HEK293 (cell line): ENCODE measurements at regions of chr7 and their contacts with region 1.

Region 1: GRCh38 chr7:149125863-149126661 is at the start of gene ZNF425:
- H3K4me3 ChIP-seq: peak within 1 kb of the TSS; percentile 73
- H3K27ac ChIP-seq: peak within 1 kb of the TSS; percentile 82
- H3K4me1 ChIP-seq: no peaks in the 10 kb centered on the region
- CTCF ChIP-seq: peak; percentile 100

Region 2: GRCh38 chr7:149147072-149147751 is 21.1 kb after region 1 on chr7 and contains the start of gene ZNF398:
- CTCF ChIA-PET with region 1: interaction called, 12 read pairs
- POLR2A ChIA-PET with region 1: interaction called, 39 read pairs
- H3K4me3 ChIP-seq: peak within 1 kb of the TSS; percentile 65
- H3K27ac ChIP-seq: peak within 1 kb of the TSS; percentile 87
- H3K4me1 ChIP-seq: no peaks in the 10 kb centered on the region
- CTCF ChIP-seq: peak; percentile 74

Region 3: DNA sequence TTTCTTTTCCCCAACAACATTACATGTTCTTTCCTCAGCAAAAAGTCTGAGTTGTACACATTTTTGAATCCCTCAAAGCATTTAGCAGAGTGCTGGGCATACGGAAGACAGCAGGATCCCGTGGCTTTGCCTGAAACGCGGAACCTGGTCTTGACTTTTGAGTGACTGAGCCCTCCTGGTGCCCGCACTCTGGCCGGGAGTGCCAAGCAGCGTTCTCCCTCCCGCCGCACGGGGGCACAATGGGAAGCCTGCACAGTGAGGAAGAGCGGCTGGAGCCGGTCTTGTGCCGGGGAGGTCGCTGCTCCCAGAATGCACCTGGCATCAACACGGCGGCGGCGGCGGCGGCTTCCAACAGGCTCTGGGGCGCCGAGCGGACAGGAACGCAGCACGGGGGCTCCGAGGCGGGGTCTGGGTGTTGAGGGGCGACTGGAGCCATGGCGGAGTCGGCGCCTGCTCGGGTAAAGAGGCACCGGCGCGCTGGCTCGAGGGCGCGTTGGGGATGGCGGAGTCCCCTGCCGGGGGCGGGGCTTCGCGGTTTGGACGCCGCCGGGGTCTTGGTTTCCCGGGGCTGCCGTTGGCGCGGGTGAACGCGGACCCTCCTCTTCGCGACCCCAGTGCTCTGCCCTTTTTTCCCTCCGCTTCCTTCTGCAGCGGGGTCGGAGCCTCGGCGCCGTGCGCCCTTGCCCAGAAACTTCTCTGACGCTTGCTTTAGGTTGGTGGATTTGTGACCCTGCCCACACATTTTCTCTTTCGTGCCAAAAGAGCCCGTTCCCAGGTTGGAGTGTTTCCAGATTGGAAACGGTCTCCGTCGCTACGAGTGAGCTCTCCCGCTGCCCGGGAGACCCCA is 113.5 kb after region 1 on chr7 and contains the start of gene ZNF212:
- CTCF ChIA-PET with region 1: no interaction called
- POLR2A ChIA-PET with region 1: no interaction called
- H3K4me3 ChIP-seq: peak within 1 kb of the TSS; percentile 70
- H3K27ac ChIP-seq: peak within 1 kb of the TSS; percentile 52; the same call in 1 of the 2 replicates
- H3K4me1 ChIP-seq: 0 out of 2 replicates have a peak, but pooled peaks cover 2% of the 10 kb centered on the region
- CTCF ChIP-seq: peak; percentile 99